Dendritic cell treated with granulocyte-macrophage colony-stimulating factor and Interleukin-4, amounts not matched to agents 40 ng/mL and 50 ng/mL, for 4 days (primary cell): ENCODE measurements at regions of chr1 and their contacts with region 1.

Region 1: GRCh38 chr1:179340918-179341317 is 24.9 kb upstream of the AXDND1 start:
- H3K4me3 Mint-ChIP-seq: no peak overlapping the region
- H3K27ac Mint-ChIP-seq: peak overlapping the region; percentile 47
- H3K4me1 Mint-ChIP-seq: peaks cover 32% of the 10 kb centered on the region
- H3K27me3 Mint-ChIP-seq: no peaks in the 10 kb centered on the region

Region 2: GRCh38 chr1:179121159-179121938 is 219.6 kb before region 1 on chr1:
- intact Hi-C with region 1: loop called (anchors 10 kb)
- H3K4me3 Mint-ChIP-seq: no peak overlapping the region
- H3K27ac Mint-ChIP-seq: no peak overlapping the region
- H3K4me1 Mint-ChIP-seq: peaks cover 12% of the 10 kb centered on the region
- H3K27me3 Mint-ChIP-seq: no peaks in the 10 kb centered on the region